WTC11 (cell line): ENCODE measurements at regions of chr5 and their contacts with region 1.

Region 1: DNA sequence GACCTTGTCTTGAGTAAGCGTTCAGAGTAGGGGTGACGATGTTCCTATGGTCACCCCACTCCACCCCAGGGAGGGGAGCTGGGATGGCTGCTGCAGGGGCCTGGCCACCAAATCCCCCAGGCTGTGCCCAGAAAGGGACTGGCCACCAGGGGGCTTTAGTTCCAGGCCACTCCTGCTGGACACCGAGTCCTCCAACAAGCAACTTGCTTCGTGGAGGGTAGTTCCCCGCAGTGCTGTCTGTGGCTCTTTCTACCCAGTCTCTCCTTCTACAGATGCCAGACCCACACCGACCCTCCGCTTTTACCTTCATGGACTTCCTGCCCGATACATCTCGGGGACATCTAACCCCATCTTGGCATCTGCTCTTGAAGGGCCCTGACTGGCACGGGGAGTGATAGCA is 35.7 kb upstream of the GABRP start:
- DNase-seq: peak; percentile 72
- ATAC-seq: peak; percentile 24
- H3K4me3 Mint-ChIP-seq: no peak overlapping the region
- H3K27ac Mint-ChIP-seq: peak overlapping the region; percentile 99
- H3K4me1 Mint-ChIP-seq: peaks cover 73% of the 10 kb centered on the region
- H3K27me3 Mint-ChIP-seq: peaks cover 24% of the 10 kb centered on the region
- CTCF ChIP-seq: peak; percentile 60

Region 2: DNA sequence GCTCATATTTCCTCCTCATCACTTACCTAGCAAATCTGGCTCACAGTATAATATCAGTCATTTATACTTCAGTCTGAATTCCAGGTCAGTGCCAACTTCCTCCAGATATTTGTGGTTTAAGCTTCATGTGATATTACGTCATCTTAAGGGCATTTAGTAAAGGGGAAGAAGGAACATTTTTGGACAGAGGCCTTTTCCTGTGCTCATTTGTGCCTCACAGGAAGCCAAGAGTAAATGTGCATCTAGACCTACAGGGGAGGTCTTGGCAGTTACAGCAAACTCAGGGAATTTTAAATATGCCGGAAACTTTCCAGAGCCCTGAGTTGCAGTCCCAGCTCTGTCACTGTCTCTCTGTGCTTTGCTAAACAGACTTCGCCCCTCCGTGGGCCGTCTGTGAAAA is 256.4 kb before region 1 on chr5:
- CTCF ChIA-PET with region 1: no interaction called
- POLR2A ChIA-PET with region 1: no interaction called
- DNase-seq: no peak
- ATAC-seq: no peak
- H3K4me3 Mint-ChIP-seq: no peak overlapping the region
- H3K27ac Mint-ChIP-seq: no peak overlapping the region
- H3K4me1 Mint-ChIP-seq: peaks cover 12% of the 10 kb centered on the region
- H3K27me3 Mint-ChIP-seq: no peaks in the 10 kb centered on the region
- CTCF ChIP-seq: no peak

Region 3: GRCh38 chr5:170633235-170634081 is 114.4 kb before region 1 on chr5:
- CTCF ChIA-PET with region 1: interaction called, 32 read pairs
- POLR2A ChIA-PET with region 1: interaction called, 5 read pairs
- DNase-seq: peak; percentile 28
- ATAC-seq: peak; percentile 34
- H3K4me3 Mint-ChIP-seq: peak overlapping the region; percentile 82
- H3K27ac Mint-ChIP-seq: peak overlapping the region; percentile 98
- H3K4me1 Mint-ChIP-seq: peaks cover 39% of the 10 kb centered on the region
- H3K27me3 Mint-ChIP-seq: no peaks in the 10 kb centered on the region; the same call in 1 of the 2 replicates
- CTCF ChIP-seq: peak; percentile 2; the same call in 1 of the 2 replicates

Region 4: DNA sequence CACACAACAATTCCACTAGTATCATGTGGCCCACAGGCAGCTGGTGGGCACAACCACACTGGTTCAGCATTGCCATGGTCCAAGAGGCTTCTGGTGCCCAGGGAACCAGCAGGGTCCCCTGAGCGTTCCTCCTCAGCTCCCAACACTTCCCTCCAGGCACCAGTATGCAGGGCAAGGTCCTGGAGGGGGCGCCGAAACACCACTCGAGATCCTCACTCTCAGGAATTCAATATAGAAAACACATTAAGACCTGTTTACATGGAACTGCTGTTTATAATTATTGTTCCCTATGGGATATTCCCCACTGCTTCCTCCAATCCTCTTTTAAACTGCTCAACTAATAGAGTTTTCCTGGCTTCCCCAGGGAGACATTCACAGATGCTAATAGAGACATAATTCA is 56.2 kb before region 1 on chr5:
- CTCF ChIA-PET with region 1: interaction called, 18 read pairs
- POLR2A ChIA-PET with region 1: no interaction called
- DNase-seq: peak; percentile 73
- ATAC-seq: peak; percentile 84
- H3K4me3 Mint-ChIP-seq: no peak overlapping the region
- H3K27ac Mint-ChIP-seq: no peak overlapping the region
- H3K4me1 Mint-ChIP-seq: peaks cover 31% of the 10 kb centered on the region
- H3K27me3 Mint-ChIP-seq: no peaks in the 10 kb centered on the region; the same call in none of the 2 replicates
- CTCF ChIP-seq: 0 out of 2 replicates have a peak, but pooled peaks have one; percentile 17

Region 5: DNA sequence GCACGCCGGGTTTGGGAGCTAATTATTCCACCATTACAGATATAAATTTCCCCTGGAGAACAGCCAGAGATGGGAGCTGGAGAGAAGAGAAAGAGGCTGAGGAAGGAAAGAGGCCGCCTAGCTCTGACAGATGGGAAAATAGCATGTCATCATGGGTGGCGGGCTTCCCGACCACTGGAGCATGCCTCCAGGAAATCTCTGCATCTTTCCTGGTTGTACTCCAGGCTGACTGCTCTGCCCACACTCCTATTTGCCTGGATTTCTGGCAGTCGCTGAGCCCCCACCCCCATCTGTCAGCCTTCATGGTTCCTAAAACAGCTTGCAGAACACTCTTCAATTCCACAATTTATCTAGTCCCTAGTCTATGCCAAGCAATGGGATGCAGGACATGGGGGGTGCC is 21.4 kb after region 1 on chr5:
- CTCF ChIA-PET with region 1: interaction called, 62 read pairs
- POLR2A ChIA-PET with region 1: interaction called, 6 read pairs
- DNase-seq: no peak
- ATAC-seq: no peak
- H3K4me3 Mint-ChIP-seq: no peak overlapping the region
- H3K27ac Mint-ChIP-seq: no peak overlapping the region; the same call in 1 of the 2 replicates
- H3K4me1 Mint-ChIP-seq: peaks cover 52% of the 10 kb centered on the region
- H3K27me3 Mint-ChIP-seq: peaks cover 3% of the 10 kb centered on the region; the same call in 1 of the 2 replicates
- CTCF ChIP-seq: no peak

Region 6: GRCh38 chr5:170791325-170791954 is 43.6 kb after region 1 on chr5:
- CTCF ChIA-PET with region 1: interaction called, 449 read pairs
- POLR2A ChIA-PET with region 1: interaction called, 14 read pairs
- DNase-seq: peak; percentile 84
- ATAC-seq: peak; percentile 90
- H3K4me3 Mint-ChIP-seq: no peak overlapping the region
- H3K27ac Mint-ChIP-seq: no peak overlapping the region; the same call in 1 of the 2 replicates
- H3K4me1 Mint-ChIP-seq: peaks cover 36% of the 10 kb centered on the region
- H3K27me3 Mint-ChIP-seq: peaks cover 6% of the 10 kb centered on the region; the same call in 1 of the 2 replicates
- CTCF ChIP-seq: peak; percentile 32